ENCODE measurements at regions of chr6 and their contacts with region 1.

Region 1: DNA sequence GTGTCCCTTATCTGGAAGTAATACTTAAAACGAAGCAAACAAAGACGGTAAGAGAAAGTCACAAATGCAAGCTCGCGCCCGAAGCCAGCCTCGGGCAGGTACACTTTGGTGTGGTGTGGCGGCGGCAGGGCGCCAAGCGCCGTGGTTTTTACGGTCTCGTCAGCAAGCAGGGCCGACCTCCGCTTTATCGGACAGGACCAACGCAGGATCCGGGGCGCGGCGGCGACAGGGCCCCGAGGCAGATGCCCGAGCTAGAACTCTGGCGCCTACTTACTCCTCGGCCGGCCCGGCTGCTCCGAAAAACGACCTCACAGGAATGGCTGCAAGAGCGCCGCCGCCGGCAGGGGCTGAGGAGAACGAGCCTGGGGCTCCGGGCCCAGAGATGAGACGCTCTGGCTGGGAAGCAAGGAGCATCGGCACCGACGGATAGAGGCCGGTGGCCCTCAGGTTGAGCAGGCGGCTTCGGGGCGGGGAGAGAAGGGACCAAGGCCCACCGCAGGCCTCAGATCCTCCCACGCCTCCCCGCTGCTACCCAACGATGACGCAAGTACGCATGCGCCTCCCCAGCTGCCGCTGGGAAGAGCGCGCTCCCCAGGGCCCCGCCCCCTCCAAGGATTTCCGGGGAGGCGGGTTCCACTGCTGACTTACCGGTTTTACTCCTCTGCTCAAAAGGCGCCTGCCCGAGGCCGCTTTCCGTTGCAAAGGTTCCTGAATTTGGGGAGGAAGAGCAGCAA is 60.6 kb downstream of the FAM217A start:
- DNase-seq: peak; percentile 89 to 91
- ATAC-seq: peak; percentile 71 to 73
- H3K4me3 ChIP-seq: peak overlapping the region; percentile 83 to 90 (median 86)
- H3K27ac ChIP-seq: peak overlapping the region; percentile 96 to 98 (median 97)
- H3K4me1 ChIP-seq: peaks cover 34 to 48% of the 10 kb centered on the region in 2 donors
- H3K27me3 ChIP-seq: no peaks in the 10 kb centered on the region
- CTCF ChIP-seq: peak; percentile 51 to 60 (median 55)
- POLR2A ChIP-seq: peak; percentile 89 to 94

Region 2: GRCh38 chr6:3118353-3119039 is 899.8 kb before region 1 on chr6 and contains the start of gene BPHL:
- in situ Hi-C with region 1: loop called in 2 of 4 experiments (anchors 10 to 25 kb)
- intact Hi-C with region 1: no loop called
- DNase-seq: peak; percentile 95 to 96
- ATAC-seq: peak; percentile 96
- H3K4me3 ChIP-seq: peak within 1 kb of the TSS; percentile 78 to 90 (median 82)
- H3K27ac ChIP-seq: peak within 1 kb of the TSS; percentile 90 to 97 (median 96)
- H3K4me1 ChIP-seq: peaks cover 13 to 14% of the 10 kb centered on the region in 2 donors
- H3K27me3 ChIP-seq: no peaks in the 10 kb centered on the region
- CTCF ChIP-seq: no peak
- POLR2A ChIP-seq: peak; percentile 76
- total RNA-seq, gene BPHL: 4.7 to 8.7 (median 5.8) TPM

Region 3: DNA sequence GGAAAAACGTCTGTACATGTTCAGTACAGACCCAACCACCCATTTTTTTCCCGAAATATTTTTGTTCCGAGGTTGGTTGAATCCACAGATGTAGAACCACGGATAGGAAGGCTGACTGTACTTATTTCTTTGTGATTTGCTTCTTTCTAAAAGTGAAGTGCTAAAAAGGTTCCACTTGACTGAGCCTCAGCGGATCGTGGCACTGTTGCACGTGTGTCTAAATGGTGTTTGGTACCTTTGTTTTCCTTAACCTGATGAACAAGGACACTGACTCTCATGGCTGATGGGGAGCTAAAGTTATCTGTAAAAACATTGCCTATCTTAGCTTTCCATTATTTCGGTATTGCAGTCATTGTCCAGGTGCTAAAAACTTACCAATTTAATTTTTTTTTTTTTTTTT is 893.7 kb before region 1 on chr6:
- in situ Hi-C with region 1: loop called in 2 of 4 experiments (anchors 10 to 25 kb)
- intact Hi-C with region 1: no loop called
- DNase-seq: no peak
- ATAC-seq: no peak
- H3K4me3 ChIP-seq: no peak overlapping the region
- H3K27ac ChIP-seq: no peak overlapping the region
- H3K4me1 ChIP-seq: no peaks in the 10 kb centered on the region
- H3K27me3 ChIP-seq: no peaks in the 10 kb centered on the region
- CTCF ChIP-seq: no peak
- POLR2A ChIP-seq: no peak

Region 4: DNA sequence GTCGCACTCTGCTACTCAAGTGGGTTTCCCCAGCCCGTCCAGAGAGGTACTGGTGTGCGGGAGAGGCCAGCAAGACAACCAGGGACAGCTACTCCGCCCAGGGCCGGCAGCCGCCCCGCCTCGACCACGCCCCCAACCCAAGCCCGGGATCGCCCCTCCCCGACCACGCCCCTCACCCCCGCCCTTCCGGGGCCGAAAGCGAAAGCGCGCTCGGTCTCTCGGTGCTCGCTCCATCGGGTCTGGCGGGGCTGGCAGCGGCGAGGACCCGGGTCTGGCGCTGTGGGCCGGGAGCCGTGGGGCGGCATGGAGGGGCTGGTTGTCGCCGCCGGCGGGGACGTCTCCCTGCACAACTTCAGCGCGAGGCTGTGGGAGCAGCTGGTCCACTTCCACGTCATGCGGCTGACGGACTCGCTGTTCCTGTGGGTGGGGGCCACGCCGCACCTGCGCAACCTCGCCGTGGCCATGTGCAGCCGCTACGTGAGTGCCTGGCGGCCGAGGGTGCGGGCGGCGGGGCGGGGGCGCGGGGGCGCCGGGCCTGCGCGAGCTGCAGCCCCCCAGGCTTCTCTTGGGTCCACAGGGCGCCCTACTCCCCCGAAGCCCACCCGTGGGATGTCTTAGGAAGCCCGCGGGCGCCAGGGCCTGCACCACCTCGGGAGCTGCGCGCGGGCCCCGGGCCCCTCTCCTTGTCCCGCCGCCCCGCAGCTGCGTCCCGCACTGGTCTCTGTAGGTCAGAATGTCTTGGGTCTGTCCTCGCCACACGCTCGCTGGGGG is 759.4 kb before region 1 on chr6 and contains the start of gene PSMG4:
- in situ Hi-C with region 1: loop called in 1 of 4 experiments (anchors 25 kb)
- intact Hi-C with region 1: no loop called
- DNase-seq: peak; percentile 92 to 93
- ATAC-seq: peak; percentile 84 to 85
- H3K4me3 ChIP-seq: peak within 1 kb of the TSS; percentile 88 to 91 (median 90)
- H3K27ac ChIP-seq: peak within 1 kb of the TSS; percentile 84 to 93 (median 92)
- H3K4me1 ChIP-seq: peaks cover 33 to 41% of the 10 kb centered on the region in 2 donors
- H3K27me3 ChIP-seq: no peaks in the 10 kb centered on the region
- CTCF ChIP-seq: peak in 2 of 5 experiments; percentile 11 to 16
- POLR2A ChIP-seq: peak; percentile 82 to 84
- total RNA-seq, gene PSMG4: 16.4 to 27.6 (median 22.0) TPM

Region 5: GRCh38 chr6:3281631-3282475 is 736.5 kb before region 1 on chr6:
- in situ Hi-C with region 1: loop called in 2 of 4 experiments (anchors 25 kb)
- intact Hi-C with region 1: no loop called
- DNase-seq: peak; percentile 56 to 78
- ATAC-seq: peak; percentile 86 to 87
- H3K4me3 ChIP-seq: no peak overlapping the region
- H3K27ac ChIP-seq: peak overlapping the region; percentile 28 to 75 (median 67)
- H3K4me1 ChIP-seq: peaks cover 20 to 28% of the 10 kb centered on the region in 2 donors
- H3K27me3 ChIP-seq: no peaks in the 10 kb centered on the region
- CTCF ChIP-seq: no peak
- POLR2A ChIP-seq: no peak

Region 6: GRCh38 chr6:3841711-3842565 is 176.4 kb before region 1 on chr6:
- in situ Hi-C with region 1: no loop called
- intact Hi-C with region 1: loop called (anchors 5 kb)
- DNase-seq: peak; percentile 78 to 85
- ATAC-seq: peak; percentile 93 to 95
- H3K4me3 ChIP-seq: no peak overlapping the region
- H3K27ac ChIP-seq: peak overlapping the region; percentile 33 to 77 (median 63)
- H3K4me1 ChIP-seq: peaks cover 16 to 20% of the 10 kb centered on the region in 2 donors
- H3K27me3 ChIP-seq: no peaks in the 10 kb centered on the region
- CTCF ChIP-seq: no peak
- POLR2A ChIP-seq: peak; percentile 41 to 58

Region 7: DNA sequence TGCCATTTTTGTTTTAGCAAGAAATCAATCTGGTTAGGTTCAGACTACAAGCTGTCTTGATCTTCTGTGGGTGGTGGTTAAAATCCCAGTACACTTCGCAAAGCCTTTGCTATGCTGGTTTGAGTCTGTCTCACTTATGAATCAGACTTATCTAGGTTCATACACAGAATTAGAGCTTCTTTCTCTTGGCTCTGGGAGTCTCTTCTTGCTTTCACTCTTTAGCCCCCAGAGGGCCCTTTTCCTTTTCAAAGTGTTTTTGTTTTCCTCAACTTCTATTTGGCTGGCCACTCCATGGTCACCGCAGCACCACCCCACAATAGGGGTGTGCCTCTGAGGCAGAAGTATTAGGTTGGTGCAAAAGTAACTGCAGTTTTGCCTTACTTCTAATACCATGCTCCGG is 95.8 kb after region 1 on chr6:
- in situ Hi-C with region 1: no loop called
- intact Hi-C with region 1: loop called (anchors 5 kb)
- DNase-seq: no peak
- ATAC-seq: no peak
- H3K4me3 ChIP-seq: no peak overlapping the region
- H3K27ac ChIP-seq: peak overlapping the region; percentile 54 to 65 (median 58)
- H3K4me1 ChIP-seq: peaks cover 24 to 28% of the 10 kb centered on the region in 2 donors
- H3K27me3 ChIP-seq: no peaks in the 10 kb centered on the region
- CTCF ChIP-seq: no peak
- POLR2A ChIP-seq: no peak

Region 8: GRCh38 chr6:4460586-4461475 is 442.5 kb after region 1 on chr6:
- in situ Hi-C with region 1: no loop called
- intact Hi-C with region 1: no loop called
- DNase-seq: peak; percentile 67 to 77
- ATAC-seq: peak; percentile 84 to 90
- H3K4me3 ChIP-seq: peak overlapping the region in 2 of 4 donors; percentile 7 to 19
- H3K27ac ChIP-seq: peak overlapping the region; percentile 38 to 72 (median 68)
- H3K4me1 ChIP-seq: peaks cover 18 to 22% of the 10 kb centered on the region in 2 donors
- H3K27me3 ChIP-seq: no peaks in the 10 kb centered on the region
- CTCF ChIP-seq: no peak
- POLR2A ChIP-seq: peak in 1 of 2 donors; percentile 32

Measured in gastrocnemius medialis (tissue), 4 donors.